Psoas muscle (tissue), 8 donors: ENCODE measurements at regions of chr17 and their contacts with region 1.

Region 1: GRCh38 chr17:17836250-17836817 is 452 bp downstream of the SREBF1 start:
- DNase-seq: peak; percentile 97 to 99
- ATAC-seq: peak; percentile 82 to 87 (median 84)
- H3K4me3 ChIP-seq: peak overlapping the region; percentile 88
- H3K27ac ChIP-seq: peak overlapping the region; percentile 100
- H3K4me1 ChIP-seq: peaks cover 59% of the 10 kb centered on the region
- H3K27me3 ChIP-seq: no peaks in the 10 kb centered on the region
- CTCF ChIP-seq: no peak

Region 2: GRCh38 chr17:17783116-17783824 is 53.1 kb before region 1 on chr17:
- intact Hi-C with region 1: no loop called
- DNase-seq: peak; percentile 76 to 85
- ATAC-seq: peak; percentile 64 to 69 (median 68)
- H3K4me3 ChIP-seq: peak overlapping the region; percentile 72
- H3K27ac ChIP-seq: peak overlapping the region; percentile 88
- H3K4me1 ChIP-seq: peaks cover 33% of the 10 kb centered on the region
- H3K27me3 ChIP-seq: no peaks in the 10 kb centered on the region
- CTCF ChIP-seq: peak; percentile 17

Region 3: DNA sequence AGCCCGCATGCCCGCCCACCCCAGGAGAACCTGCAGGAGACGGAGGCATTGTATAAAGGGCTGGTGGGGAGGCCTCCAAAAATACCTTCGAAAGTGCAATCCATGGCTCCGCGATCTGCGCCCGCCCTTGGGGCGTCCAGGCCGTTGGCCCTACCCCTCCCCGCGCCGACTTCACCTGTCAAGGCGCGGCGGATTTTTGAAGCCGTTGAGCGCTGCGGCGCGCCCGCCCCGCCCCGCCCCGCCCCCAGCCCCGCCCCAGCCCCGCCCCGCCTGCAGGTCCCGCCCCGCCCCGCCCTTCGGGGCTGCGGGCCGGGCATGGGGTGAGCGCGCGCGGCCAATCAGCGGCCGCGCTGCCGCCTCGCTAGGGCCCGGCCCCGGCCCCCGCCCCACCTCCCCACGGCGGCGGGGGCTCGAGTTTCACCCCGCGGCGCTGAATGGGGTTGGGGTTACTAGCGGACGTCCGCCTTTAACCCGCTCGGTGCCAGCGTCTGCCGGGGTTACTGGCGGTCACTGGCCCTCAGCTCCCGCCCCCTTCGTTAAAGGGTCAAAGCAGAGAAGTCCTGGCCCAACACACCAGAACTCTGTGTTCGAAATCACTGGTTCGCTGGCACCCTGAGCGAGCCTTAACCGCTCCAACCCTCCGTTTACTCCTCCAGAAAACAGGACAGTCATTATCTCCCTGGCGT is 12.8 kb before region 1 on chr17:
- intact Hi-C with region 1: loop called (anchors 2 kb)
- DNase-seq: peak; percentile 90 to 95
- ATAC-seq: peak; percentile 84 to 89 (median 86)
- H3K4me3 ChIP-seq: peak overlapping the region; percentile 74
- H3K27ac ChIP-seq: peak overlapping the region; percentile 92
- H3K4me1 ChIP-seq: peaks cover 74% of the 10 kb centered on the region
- H3K27me3 ChIP-seq: no peaks in the 10 kb centered on the region
- CTCF ChIP-seq: no peak

Region 4: GRCh38 chr17:17983376-17983775 is 147.0 kb after region 1 on chr17:
- intact Hi-C with region 1: no loop called
- DNase-seq: no peak
- ATAC-seq: peak in 2 of 4 donors; percentile 36 to 63
- H3K4me3 ChIP-seq: no peak overlapping the region
- H3K27ac ChIP-seq: no peak overlapping the region
- H3K4me1 ChIP-seq: no peaks in the 10 kb centered on the region
- H3K27me3 ChIP-seq: no peaks in the 10 kb centered on the region
- CTCF ChIP-seq: no peak